ENCODE measurements at regions of chr1 and their contacts with region 1.

Region 1: GRCh38 chr1:231612393-231613089 is 14.0 kb upstream of the DISC1 start:
- DNase-seq: peak; percentile 84
- ATAC-seq: peak; percentile 95
- H3K4me3 ChIP-seq: peak overlapping the region in 4 of 5 experiments; percentile 26 to 59 (median 50)
- H3K4me3 Mint-ChIP-seq: peak overlapping the region; percentile 56
- H3K27ac ChIP-seq: peak overlapping the region; percentile 8 to 47
- H3K27ac Mint-ChIP-seq: peak overlapping the region; percentile 74
- H3K4me1 ChIP-seq: peaks cover 58 to 61% of the 10 kb centered on the region in 2 donors
- H3K4me1 Mint-ChIP-seq: peaks cover 63% of the 10 kb centered on the region
- H3K27me3 ChIP-seq: peaks cover 0 to 3% (median 0%) of the 10 kb centered on the region in 4 experiments
- H3K27me3 Mint-ChIP-seq: peaks cover 8% of the 10 kb centered on the region
- CTCF ChIP-seq: no peak

Region 2: DNA sequence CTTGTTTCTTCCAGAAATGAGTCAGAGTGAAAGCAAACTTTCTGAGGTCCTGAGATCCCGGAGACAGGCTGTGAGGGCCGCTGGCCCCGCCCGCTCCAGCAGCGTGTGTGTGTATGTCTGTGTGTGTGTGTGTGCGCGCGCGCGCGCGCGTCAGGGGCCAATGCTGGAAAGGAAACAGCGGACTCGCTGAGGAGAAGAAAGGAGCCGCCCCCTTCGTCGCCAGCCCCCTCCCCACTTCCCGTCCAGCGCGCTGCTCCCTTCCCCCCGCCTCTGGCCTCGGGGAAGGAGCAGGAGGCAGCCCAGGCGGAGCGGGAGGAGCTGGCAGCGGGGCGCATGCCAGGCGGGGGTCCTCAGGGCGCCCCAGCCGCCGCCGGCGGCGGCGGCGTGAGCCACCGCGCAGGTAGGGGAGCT is 14.0 kb after region 1 on chr1 and contains the start of gene DISC1:
- CTCF ChIA-PET with region 1: interaction called, 5 read pairs
- POLR2A ChIA-PET with region 1: interaction called, 4 read pairs
- intact Hi-C with region 1: loop called (anchors 2 kb)
- DNase-seq: peak; percentile 75
- ATAC-seq: peak; percentile 71
- H3K4me3 ChIP-seq: peak within 1 kb of the TSS; percentile 57 to 83 (median 66)
- H3K4me3 Mint-ChIP-seq: peak within 1 kb of the TSS; percentile 96
- H3K27ac ChIP-seq: no peak within 1 kb of the TSS
- H3K27ac Mint-ChIP-seq: peak within 1 kb of the TSS; percentile 88
- H3K4me1 ChIP-seq: peaks cover 18 to 19% of the 10 kb centered on the region in 2 donors
- H3K4me1 Mint-ChIP-seq: peaks cover 25% of the 10 kb centered on the region
- H3K27me3 ChIP-seq: peaks cover 0 to 19% (median 12%) of the 10 kb centered on the region in 4 experiments
- H3K27me3 Mint-ChIP-seq: peaks cover 25% of the 10 kb centered on the region
- CTCF ChIP-seq: no peak
- total RNA-seq, gene DISC1: 3.3 and 4.3 TPM in 2 replicates